ENCODE measurements at regions of chr22 and their contacts with region 1.

Region 1: GRCh38 chr22:19970479-19971275 is 29.1 kb upstream of the TXNRD2 start:
- DNase-seq: peak; percentile 52 to 59 (median 55)
- H3K4me3 ChIP-seq: no peak overlapping the region
- H3K4me3 Mint-ChIP-seq: no peak overlapping the region
- H3K27ac ChIP-seq: no peak overlapping the region
- H3K27ac Mint-ChIP-seq: peak overlapping the region in 1 of 7 donors; percentile 14
- H3K4me1 ChIP-seq: no peaks in the 10 kb centered on the region
- H3K4me1 Mint-ChIP-seq: peaks cover 20% of the 10 kb centered on the region
- H3K27me3 ChIP-seq: no peaks in the 10 kb centered on the region
- H3K27me3 Mint-ChIP-seq: peaks cover 2 to 5% (median 3%) of the 10 kb centered on the region in 3 donors
- CTCF ChIP-seq: peak; percentile 99

Region 2: GRCh38 chr22:19800761-19801244 is 169.9 kb before region 1 on chr22:
- intact Hi-C with region 1: no loop called
- DNase-seq: no peak
- H3K4me3 ChIP-seq: no peak overlapping the region
- H3K4me3 Mint-ChIP-seq: no peak overlapping the region
- H3K27ac ChIP-seq: no peak overlapping the region
- H3K27ac Mint-ChIP-seq: no peak overlapping the region
- H3K4me1 ChIP-seq: no peaks in the 10 kb centered on the region
- H3K4me1 Mint-ChIP-seq: no peaks in the 10 kb centered on the region
- H3K27me3 ChIP-seq: no peaks in the 10 kb centered on the region
- H3K27me3 Mint-ChIP-seq: peaks cover 0 to 2% (median 0%) of the 10 kb centered on the region in 3 donors
- CTCF ChIP-seq: no peak

Region 3: DNA sequence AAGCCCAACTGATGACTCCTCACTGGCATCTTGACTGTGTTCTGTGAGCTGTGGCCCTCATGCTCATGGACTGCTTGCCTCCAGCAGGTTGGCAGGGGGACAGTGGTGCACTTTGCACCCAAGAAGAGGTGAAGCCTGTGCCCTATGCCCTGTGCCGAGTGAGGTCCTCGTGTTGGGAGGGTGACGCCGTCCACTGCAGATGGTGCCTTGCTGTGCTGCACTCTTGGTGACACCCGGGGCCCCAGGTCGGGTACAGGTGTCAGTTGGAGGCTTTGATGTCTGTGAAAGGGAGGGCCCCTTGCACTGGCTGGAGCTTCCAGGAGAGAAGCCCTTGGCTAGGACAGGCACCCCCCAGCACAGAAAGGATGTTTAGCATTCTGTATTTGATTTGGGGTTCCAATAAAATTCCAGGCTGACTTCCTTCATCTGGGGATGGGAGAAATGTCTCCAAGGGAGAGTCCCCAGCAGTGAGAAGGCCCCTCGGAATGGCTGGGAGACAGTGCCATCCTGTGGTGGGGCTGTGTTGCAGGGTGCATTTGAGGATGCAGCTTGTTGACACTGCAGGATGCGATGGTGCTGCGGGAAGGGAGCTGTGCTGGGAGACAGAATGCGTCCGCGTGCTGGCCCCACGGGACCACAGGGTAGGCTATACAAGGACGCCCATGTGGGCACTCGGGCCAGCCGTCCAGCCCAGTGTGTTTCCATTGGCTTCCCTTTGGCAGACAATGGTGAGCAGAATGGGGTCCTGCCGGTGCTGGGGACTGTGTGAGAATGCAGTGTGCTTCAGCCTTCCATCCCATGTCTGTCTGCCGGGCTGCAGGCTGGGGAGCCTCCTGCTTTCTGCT is 158.4 kb after region 1 on chr22:
- intact Hi-C with region 1: loop called in 1 of 2 experiments (anchors 5 kb)
- DNase-seq: peak in 1 of 3 donors; percentile 20
- H3K4me3 ChIP-seq: no peak overlapping the region
- H3K4me3 Mint-ChIP-seq: peak overlapping the region in 1 of 2 donors; percentile 27
- H3K27ac ChIP-seq: peak overlapping the region in 1 of 2 donors; percentile 5
- H3K27ac Mint-ChIP-seq: peak overlapping the region in 1 of 7 donors; percentile 30
- H3K4me1 ChIP-seq: peaks cover 15 to 27% of the 10 kb centered on the region in 2 donors
- H3K4me1 Mint-ChIP-seq: peaks cover 17% of the 10 kb centered on the region
- H3K27me3 ChIP-seq: no peaks in the 10 kb centered on the region
- H3K27me3 Mint-ChIP-seq: no peaks in the 10 kb centered on the region
- CTCF ChIP-seq: peak; percentile 27